ENCODE measurements at regions of chr7 and their contacts with region 1.

Region 1: DNA sequence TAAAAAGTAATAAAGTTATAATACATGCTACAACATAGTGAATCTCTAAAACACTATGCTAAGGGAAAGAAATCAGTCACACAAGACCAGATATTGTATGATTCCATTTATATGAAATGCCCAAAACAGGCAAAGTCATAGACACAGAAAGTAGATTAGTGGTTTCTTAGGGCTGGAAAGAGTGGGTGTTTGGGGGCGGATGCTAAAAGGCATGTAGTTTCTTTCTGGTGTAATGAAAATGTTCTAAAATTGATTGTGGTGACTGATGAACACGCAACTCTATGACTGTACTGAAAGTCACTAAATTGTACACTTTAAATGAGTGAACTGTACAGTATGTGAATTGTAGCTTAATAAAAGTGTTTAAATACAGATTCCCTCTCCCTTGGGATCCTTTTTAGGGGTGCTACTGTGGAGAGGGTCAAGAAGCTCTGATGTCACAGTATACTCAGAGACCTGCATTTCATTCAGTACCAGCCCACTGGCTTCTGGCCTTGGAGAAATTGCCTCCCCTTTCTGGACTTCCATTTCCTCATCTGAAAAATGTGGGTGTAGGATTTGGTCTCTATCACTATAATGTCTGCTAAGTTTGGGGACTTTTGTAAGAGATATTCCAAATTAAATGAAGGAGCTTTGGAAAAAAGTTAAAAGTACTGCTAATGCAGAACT is 46.4 kb downstream of the AOAH start:
- DNase-seq: peak in 6 of 35 experiments; percentile 9 to 41 (median 14)
- ATAC-seq: peak; percentile 26 to 41 (median 34)
- H3K4me3 ChIP-seq: no peak overlapping the region
- H3K4me3 Mint-ChIP-seq: peak overlapping the region; percentile 22 to 62 (median 34)
- H3K27ac ChIP-seq: peak overlapping the region; percentile 68
- H3K27ac Mint-ChIP-seq: peak overlapping the region; percentile 84 to 86
- H3K4me1 ChIP-seq: peaks cover 17 to 27% of the 10 kb centered on the region in 2 experiments
- H3K4me1 Mint-ChIP-seq: peaks cover 44 to 54% (median 47%) of the 10 kb centered on the region in 3 donors
- H3K27me3 ChIP-seq: no peaks in the 10 kb centered on the region
- H3K27me3 Mint-ChIP-seq: no peaks in the 10 kb centered on the region

Region 2: DNA sequence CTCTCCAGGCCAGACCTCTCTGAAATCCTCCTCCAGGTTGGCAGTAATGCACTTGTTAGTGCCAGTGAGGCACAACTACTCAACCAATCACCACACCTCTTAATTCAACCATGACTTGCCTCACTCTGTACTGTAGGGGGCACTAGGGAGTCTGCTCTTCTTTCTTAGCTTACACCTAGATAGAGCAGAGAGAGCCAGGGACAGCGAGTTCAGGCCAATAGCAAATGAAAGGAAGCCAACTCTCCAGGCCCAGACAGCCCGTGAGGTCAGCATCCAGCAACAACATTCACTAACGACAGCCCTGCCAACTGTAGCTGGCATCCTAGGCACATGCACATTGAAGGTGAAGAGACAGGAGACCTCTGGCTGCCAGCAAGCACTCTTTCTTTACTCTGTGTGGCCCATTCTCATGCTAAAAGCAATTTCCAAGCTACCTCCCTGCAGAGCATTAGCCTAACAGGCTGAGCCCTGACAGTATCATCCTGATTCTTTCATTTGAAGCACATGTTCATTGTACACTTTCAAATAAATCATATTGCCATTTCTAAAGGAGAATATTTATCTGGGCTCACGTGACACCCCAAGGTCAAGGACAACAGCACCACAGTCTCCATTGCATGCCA is 1776.9 kb before region 1 on chr7:
- CTCF ChIA-PET with region 1: no interaction called
- POLR2A ChIA-PET with region 1: interaction called in 1 of 2 experiments, 10 read pairs
- DNase-seq: no peak
- ATAC-seq: no peak
- H3K4me3 ChIP-seq: no peak overlapping the region
- H3K4me3 Mint-ChIP-seq: no peak overlapping the region
- H3K27ac ChIP-seq: no peak overlapping the region
- H3K27ac Mint-ChIP-seq: no peak overlapping the region
- H3K4me1 ChIP-seq: no peaks in the 10 kb centered on the region
- H3K4me1 Mint-ChIP-seq: peaks cover 1 to 3% (median 2%) of the 10 kb centered on the region in 3 donors
- H3K27me3 ChIP-seq: peaks cover 2 to 5% of the 10 kb centered on the region in 2 experiments
- H3K27me3 Mint-ChIP-seq: peaks cover 28 to 36% of the 10 kb centered on the region in 2 donors

Region 3: DNA sequence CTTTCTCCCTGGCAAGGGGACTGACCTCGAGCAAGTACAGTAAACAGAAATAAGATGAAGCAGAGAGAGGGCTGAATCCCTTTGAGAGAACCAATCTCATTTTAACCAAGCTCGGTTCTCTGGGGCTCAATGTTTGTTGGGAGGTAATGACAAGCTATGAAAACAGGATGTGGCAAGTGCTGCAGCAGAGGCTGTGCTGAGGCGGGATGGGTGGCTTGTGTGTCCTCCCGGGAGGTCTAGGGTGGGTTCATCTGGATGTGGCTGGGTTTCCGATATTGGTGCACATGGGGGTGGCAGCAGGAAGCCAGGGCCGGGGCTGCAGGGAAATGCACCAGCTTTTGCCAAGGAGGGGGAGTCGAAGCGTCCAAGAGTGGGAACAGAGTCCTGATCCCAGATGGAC is 38.1 kb before region 1 on chr7:
- CTCF ChIA-PET with region 1: interaction called, 3 to 12 read pairs
- POLR2A ChIA-PET with region 1: no interaction called
- DNase-seq: peak; percentile 34 to 86 (median 64)
- ATAC-seq: peak; percentile 94 to 95 (median 95)
- H3K4me3 ChIP-seq: peak overlapping the region in 1 of 2 donors; percentile 5
- H3K4me3 Mint-ChIP-seq: peak overlapping the region; percentile 45 to 74 (median 54)
- H3K27ac ChIP-seq: peak overlapping the region; percentile 78
- H3K27ac Mint-ChIP-seq: peak overlapping the region; percentile 98 to 99
- H3K4me1 ChIP-seq: peaks cover 51 to 61% of the 10 kb centered on the region in 2 experiments
- H3K4me1 Mint-ChIP-seq: peaks cover 85 to 87% (median 87%) of the 10 kb centered on the region in 3 donors
- H3K27me3 ChIP-seq: no peaks in the 10 kb centered on the region
- H3K27me3 Mint-ChIP-seq: no peaks in the 10 kb centered on the region

Region 4: DNA sequence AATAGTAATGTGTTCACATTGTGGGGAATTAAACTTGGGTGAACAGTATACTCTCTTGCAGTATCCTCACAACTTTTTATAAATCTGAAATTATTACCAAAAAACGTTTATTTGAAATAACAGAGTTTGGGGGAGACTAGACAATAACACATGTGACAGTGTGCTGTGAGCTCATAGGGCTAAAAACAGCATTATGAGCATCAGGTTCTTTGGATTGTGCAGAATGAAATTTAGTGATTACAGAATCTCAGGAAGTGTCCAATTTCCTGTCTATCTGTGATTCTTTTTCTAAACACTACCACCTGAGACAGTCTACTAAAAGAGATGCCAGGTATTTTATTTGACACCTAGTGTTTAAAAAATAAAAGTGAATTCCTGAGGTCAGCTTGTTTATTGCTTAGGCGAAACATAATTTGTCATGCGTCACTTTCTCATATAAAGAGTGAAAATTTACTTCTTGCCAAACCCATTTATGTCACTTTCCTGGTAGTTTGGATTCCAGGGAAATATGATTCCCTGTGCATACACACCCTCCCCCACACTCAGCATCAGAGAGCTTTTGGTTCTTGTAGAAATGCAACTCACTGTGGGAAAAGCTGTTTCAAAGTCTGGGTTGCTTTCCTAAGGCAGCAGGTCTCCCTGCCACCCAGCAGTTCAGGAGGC is 24.8 kb before region 1 on chr7:
- CTCF ChIA-PET with region 1: no interaction called
- POLR2A ChIA-PET with region 1: no interaction called
- DNase-seq: no peak
- ATAC-seq: no peak
- H3K4me3 ChIP-seq: no peak overlapping the region
- H3K4me3 Mint-ChIP-seq: no peak overlapping the region
- H3K27ac ChIP-seq: no peak overlapping the region
- H3K27ac Mint-ChIP-seq: peak overlapping the region in 1 of 2 donors; percentile 70
- H3K4me1 ChIP-seq: peaks cover 10 to 20% of the 10 kb centered on the region in 2 experiments
- H3K4me1 Mint-ChIP-seq: peaks cover 17 to 35% (median 30%) of the 10 kb centered on the region in 3 donors
- H3K27me3 ChIP-seq: no peaks in the 10 kb centered on the region
- H3K27me3 Mint-ChIP-seq: no peaks in the 10 kb centered on the region

Measured in T-cell (primary cell).